IMR-90 (cell line): ENCODE measurements at regions of chr19 and their contacts with region 1.

Region 1: GRCh38 chr19:3626473-3627350 is at the start of gene CACTIN:
- DNase-seq: peak; percentile 97
- ATAC-seq: peak; percentile 99
- H3K4me3 ChIP-seq: peak within 1 kb of the TSS; percentile 91
- H3K27ac ChIP-seq: peak within 1 kb of the TSS; percentile 94
- H3K4me1 ChIP-seq: peaks cover 6% of the 10 kb centered on the region; the same call in 1 of the 2 replicates
- H3K27me3 ChIP-seq: no peaks in the 10 kb centered on the region
- CTCF ChIP-seq: no peak
- POLR2A ChIP-seq: peak; percentile 93
- RAD21 ChIP-seq: peak; percentile 6; the same call in 1 of the 2 replicates
- total RNA-seq, gene CACTIN: 10.8 and 12.8 TPM in 2 replicates

Region 2: DNA sequence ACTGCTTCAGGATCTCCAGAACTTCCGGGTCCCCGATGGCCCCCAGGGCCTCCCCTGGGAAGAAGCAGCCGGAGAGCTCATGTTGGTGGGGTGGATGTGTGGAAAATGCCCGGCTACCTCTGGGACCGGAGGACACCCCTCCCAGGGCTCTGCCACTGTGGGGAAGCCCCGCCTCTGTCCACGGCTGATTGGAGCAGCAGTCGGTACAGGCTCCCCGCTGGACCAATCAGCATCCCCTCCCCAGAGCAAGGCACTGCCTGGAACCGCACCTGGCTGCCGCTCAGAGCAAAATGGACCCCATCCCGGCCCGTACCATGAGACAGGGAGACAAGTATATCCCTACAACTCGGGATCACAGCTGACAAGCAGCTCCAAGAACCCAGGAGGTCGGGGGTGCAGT is 132.7 kb before region 1 on chr19:
- CTCF ChIA-PET with region 1: no interaction called
- POLR2A ChIA-PET with region 1: no interaction called
- dilution Hi-C with region 1: no loop called
- in situ Hi-C with region 1: no loop called
- intact Hi-C with region 1: no loop called
- DNase-seq: no peak
- ATAC-seq: peak; percentile 81
- H3K4me3 ChIP-seq: no peak overlapping the region
- H3K27ac ChIP-seq: no peak overlapping the region
- H3K4me1 ChIP-seq: no peaks in the 10 kb centered on the region
- H3K27me3 ChIP-seq: no peaks in the 10 kb centered on the region
- CTCF ChIP-seq: no peak
- POLR2A ChIP-seq: no peak
- RAD21 ChIP-seq: no peak

Region 3: DNA sequence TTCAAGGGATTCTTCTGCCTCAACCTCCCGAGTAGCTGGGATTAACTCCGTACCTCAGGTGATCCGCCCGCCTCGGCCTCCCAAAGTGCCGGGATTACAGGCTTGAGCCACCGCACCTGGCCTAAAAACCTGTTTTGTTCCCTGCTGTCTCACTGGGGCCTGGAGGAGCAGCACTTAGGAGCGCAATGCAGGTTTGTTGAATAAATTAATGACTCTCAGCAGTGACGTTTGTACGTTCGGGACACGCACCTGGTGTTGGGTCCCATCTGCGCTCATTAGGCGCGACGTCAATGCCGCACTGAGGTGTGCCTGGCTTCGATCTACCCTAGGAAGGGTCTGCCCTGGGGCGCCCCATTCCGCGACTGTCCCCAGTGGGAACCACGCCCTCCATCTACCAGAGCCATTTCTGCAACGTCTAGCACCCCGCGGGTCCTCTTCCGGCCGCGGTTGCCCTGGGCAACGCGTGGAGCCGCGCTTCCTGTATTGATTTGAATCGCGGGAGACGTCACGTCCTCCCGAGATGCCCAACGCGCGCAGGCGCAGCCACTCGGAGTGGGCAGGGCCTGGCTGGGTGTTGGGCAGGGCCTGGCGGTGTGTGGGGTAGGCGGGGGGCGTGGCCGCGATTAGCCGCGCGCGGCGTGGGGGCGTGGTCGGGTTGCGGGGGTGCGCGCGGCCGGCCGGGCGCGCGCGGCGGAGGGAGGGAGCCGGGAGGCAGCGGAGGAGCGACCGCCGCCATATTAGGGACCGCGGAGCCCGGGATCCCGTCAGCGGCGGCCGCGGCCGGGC is 120.9 kb before region 1 on chr19 and contains the start of gene FZR1:
- CTCF ChIA-PET with region 1: no interaction called
- POLR2A ChIA-PET with region 1: no interaction called
- dilution Hi-C with region 1: no loop called
- in situ Hi-C with region 1: no loop called
- intact Hi-C with region 1: loop called (anchors 5 kb)
- DNase-seq: peak; percentile 98
- ATAC-seq: peak; percentile 96
- H3K4me3 ChIP-seq: peak within 1 kb of the TSS; percentile 68
- H3K27ac ChIP-seq: peak within 1 kb of the TSS; percentile 74
- H3K4me1 ChIP-seq: peaks cover 16% of the 10 kb centered on the region
- H3K27me3 ChIP-seq: no peaks in the 10 kb centered on the region
- CTCF ChIP-seq: no peak
- POLR2A ChIP-seq: peak; percentile 19; the same call in 1 of the 2 replicates
- RAD21 ChIP-seq: no peak
- total RNA-seq, gene FZR1: 21.5 and 24.4 TPM in 2 replicates

Region 4: GRCh38 chr19:3733549-3734309 is 107.0 kb after region 1 on chr19:
- CTCF ChIA-PET with region 1: no interaction called
- POLR2A ChIA-PET with region 1: no interaction called
- dilution Hi-C with region 1: no loop called
- in situ Hi-C with region 1: no loop called
- intact Hi-C with region 1: no loop called
- DNase-seq: no peak
- ATAC-seq: no peak
- H3K4me3 ChIP-seq: no peak overlapping the region
- H3K27ac ChIP-seq: no peak overlapping the region
- H3K4me1 ChIP-seq: no peaks in the 10 kb centered on the region
- H3K27me3 ChIP-seq: peaks cover 11% of the 10 kb centered on the region
- CTCF ChIP-seq: no peak
- POLR2A ChIP-seq: no peak
- RAD21 ChIP-seq: no peak